Mammary epithelial cell (primary cell): ENCODE measurements at regions of chr6 and their contacts with region 1.

Region 1: DNA sequence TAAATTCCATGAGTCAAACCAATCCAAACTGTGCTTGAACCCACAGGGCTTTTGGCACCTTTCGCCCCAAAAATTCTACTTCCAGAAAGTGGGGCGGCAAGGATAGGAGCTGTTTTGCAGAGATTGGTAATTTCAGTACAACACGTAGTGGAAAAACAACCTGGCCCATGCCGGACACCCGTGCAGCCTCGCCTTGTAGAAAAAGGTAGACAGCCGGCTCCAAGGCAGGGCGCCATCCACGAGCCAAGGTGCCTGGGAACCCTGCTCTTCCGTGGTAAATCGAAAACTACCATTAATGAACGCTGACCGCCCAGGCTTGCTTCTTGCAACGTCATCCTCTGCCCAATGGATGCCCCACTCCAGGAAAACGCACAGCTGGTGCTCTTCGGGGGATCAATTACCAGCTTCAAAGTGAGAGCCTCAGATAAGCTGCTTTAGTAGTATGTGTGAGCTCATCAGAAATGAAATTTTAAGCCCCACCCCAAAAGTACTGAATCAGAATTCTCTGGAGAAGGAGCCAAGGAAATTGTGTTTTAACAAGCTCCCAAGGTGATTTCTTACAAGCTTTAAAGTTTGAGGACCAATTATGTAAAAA is 1.8 kb downstream of the OOEP start:
- DNase-seq: no peak
- H3K4me3 ChIP-seq: no peak overlapping the region
- H3K27ac ChIP-seq: no peak overlapping the region
- H3K4me1 ChIP-seq: no peaks in the 10 kb centered on the region
- H3K27me3 ChIP-seq: peaks cover 2% of the 10 kb centered on the region
- CTCF ChIP-seq: no peak

Region 2: DNA sequence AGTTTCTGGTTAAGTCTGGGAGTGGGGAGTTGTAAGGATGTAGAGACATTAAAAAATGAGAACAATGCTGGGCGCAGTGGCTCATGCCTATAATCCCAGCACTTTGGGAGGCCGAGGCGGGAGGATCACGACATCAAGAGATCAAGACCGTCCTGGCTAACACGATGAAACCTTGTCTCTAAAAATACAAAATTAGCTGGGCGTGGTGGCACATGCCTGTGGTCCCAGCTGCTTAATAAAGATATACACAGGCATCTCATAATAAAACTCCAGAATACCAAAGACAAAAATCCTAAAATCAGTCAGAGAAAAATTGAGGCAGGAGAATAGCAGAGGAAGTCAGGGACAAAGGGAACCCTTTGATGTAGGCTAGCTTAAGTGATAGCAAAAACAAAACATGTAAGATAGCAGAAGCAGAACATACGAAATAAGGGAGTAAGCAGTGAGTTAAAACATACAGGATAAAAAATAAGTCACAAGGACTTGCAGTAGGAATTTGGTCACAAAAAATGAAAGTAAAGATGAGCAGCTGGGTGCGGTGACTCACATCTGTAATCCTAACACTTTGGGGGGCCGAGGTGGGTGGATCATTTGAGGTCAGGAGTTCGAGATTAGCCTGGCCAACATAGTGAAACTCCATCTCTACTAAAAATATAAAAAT is 50.4 kb after region 1 on chr6:
- CTCF ChIA-PET with region 1: no interaction called
- dilution Hi-C with region 1: loop called (anchors 5 kb)
- in situ Hi-C with region 1: no loop called
- intact Hi-C with region 1: no loop called
- DNase-seq: no peak
- H3K4me3 ChIP-seq: no peak overlapping the region
- H3K27ac ChIP-seq: no peak overlapping the region
- H3K4me1 ChIP-seq: no peaks in the 10 kb centered on the region
- H3K27me3 ChIP-seq: no peaks in the 10 kb centered on the region
- CTCF ChIP-seq: no peak

Region 3: GRCh38 chr6:73451223-73452107 is 83.6 kb after region 1 on chr6:
- CTCF ChIA-PET with region 1: no interaction called
- dilution Hi-C with region 1: no loop called
- in situ Hi-C with region 1: no loop called
- intact Hi-C with region 1: no loop called
- DNase-seq: no peak
- H3K4me3 ChIP-seq: peak overlapping the region; percentile 18 to 54 (median 50)
- H3K27ac ChIP-seq: peak overlapping the region; percentile 19
- H3K4me1 ChIP-seq: peaks cover 17% of the 10 kb centered on the region
- H3K27me3 ChIP-seq: no peaks in the 10 kb centered on the region
- CTCF ChIP-seq: no peak

Region 4: GRCh38 chr6:73604020-73604419 is 236.2 kb after region 1 on chr6:
- CTCF ChIA-PET with region 1: interaction called, 11 read pairs
- dilution Hi-C with region 1: no loop called
- in situ Hi-C with region 1: no loop called
- intact Hi-C with region 1: no loop called
- DNase-seq: no peak
- H3K4me3 ChIP-seq: no peak overlapping the region
- H3K27ac ChIP-seq: no peak overlapping the region
- H3K4me1 ChIP-seq: no peaks in the 10 kb centered on the region
- H3K27me3 ChIP-seq: no peaks in the 10 kb centered on the region
- CTCF ChIP-seq: no peak